AG04449 (cell line): ENCODE measurements at regions of chr3 and their contacts with region 1.

Region 1: GRCh38 chr3:110314512-110315114 is 757.0 kb upstream of the NECTIN3 start:
- DNase-seq: no peak
- H3K4me3 ChIP-seq: no peak overlapping the region
- CTCF ChIP-seq: peak; percentile 62

Region 2: GRCh38 chr3:110301781-110302180 is 12.8 kb before region 1 on chr3:
- CTCF ChIA-PET with region 1: interaction called, 27 read pairs
- POLR2A ChIA-PET with region 1: no interaction called
- DNase-seq: no peak
- H3K4me3 ChIP-seq: no peak overlapping the region
- CTCF ChIP-seq: no peak

Region 3: GRCh38 chr3:110327870-110328269 is 13.3 kb after region 1 on chr3:
- CTCF ChIA-PET with region 1: interaction called, 22 read pairs
- POLR2A ChIA-PET with region 1: no interaction called
- DNase-seq: no peak
- H3K4me3 ChIP-seq: no peak overlapping the region
- CTCF ChIP-seq: no peak